ENCODE measurements at regions of chr3 and their contacts with region 1.

Region 1: GRCh38 chr3:124860599-124860998 is 26.6 kb downstream of the ITGB5 start:
- DNase-seq: peak; percentile 97
- H3K4me3 ChIP-seq: no peak overlapping the region
- CTCF ChIP-seq: no peak

Region 2: DNA sequence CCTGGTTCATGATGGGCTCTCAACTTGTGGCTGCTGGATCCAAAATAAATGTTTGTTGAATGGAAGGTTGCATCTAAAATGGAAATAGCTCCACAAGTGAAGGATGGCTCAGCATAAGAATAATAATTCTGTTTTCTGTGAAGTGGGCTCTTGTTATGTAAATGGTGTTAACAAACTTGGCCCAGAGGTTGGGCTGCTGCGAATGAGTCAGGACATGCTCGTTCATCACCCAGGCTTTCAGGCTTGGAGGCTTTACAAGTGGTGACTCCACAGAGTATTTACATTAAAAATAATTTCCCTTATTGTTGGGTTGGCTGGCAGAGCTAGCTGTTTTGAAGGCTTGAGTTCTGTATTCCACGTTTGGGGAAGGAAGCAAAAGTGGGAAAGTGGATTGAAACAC is 33.9 kb before region 1 on chr3:
- in situ Hi-C with region 1: loop called (anchors 5 kb)
- DNase-seq: peak; percentile 94
- H3K4me3 ChIP-seq: no peak overlapping the region
- CTCF ChIP-seq: no peak